ENCODE measurements at regions of chr10 and their contacts with region 1.

Region 1: GRCh38 chr10:88553116-88553752 is 29.9 kb downstream of the RNLS start:
- DNase-seq: peak; percentile 76
- H3K4me3 ChIP-seq: no peak overlapping the region
- H3K27ac ChIP-seq: no peak overlapping the region
- H3K4me1 ChIP-seq: no peaks in the 10 kb centered on the region
- H3K27me3 ChIP-seq: no peaks in the 10 kb centered on the region
- CTCF ChIP-seq: peak; percentile 63 to 64
- POLR2A ChIP-seq: no peak

Region 2: GRCh38 chr10:87850742-87851205 is 702.5 kb before region 1 on chr10:
- CTCF ChIA-PET with region 1: interaction called, 15 read pairs
- POLR2A ChIA-PET with region 1: no interaction called
- dilution Hi-C with region 1: loop called (anchors 25 kb)
- intact Hi-C with region 1: loop called (anchors 1 kb)
- DNase-seq: peak; percentile 54
- H3K4me3 ChIP-seq: no peak overlapping the region
- H3K27ac ChIP-seq: no peak overlapping the region
- H3K4me1 ChIP-seq: no peaks in the 10 kb centered on the region
- H3K27me3 ChIP-seq: no peaks in the 10 kb centered on the region
- CTCF ChIP-seq: peak; percentile 46 to 65
- POLR2A ChIP-seq: no peak

Region 3: DNA sequence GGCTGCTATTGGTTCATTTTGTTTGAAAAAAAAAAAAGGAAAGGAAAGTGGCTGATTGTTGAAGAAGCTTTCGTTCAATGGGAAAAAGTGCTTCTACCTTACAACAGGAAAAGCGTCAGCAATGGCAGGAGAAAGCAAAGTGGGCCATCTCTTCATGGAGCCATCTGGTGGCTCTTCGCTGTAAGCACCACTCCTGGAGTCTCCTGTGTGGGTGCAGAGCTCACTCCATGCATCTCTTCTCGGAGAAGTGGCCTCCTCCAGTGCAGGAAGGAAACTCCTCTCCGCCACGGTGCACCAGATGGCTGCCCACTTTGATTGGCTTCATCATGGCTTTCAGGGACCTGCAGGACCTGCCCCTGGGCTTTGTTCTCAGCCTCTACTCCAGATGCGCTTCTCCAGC is 438.9 kb before region 1 on chr10:
- CTCF ChIA-PET with region 1: interaction called, 6 read pairs
- POLR2A ChIA-PET with region 1: no interaction called
- dilution Hi-C with region 1: no loop called
- intact Hi-C with region 1: loop called (anchors 2 kb)
- DNase-seq: peak; percentile 51
- H3K4me3 ChIP-seq: no peak overlapping the region
- H3K27ac ChIP-seq: no peak overlapping the region
- H3K4me1 ChIP-seq: no peaks in the 10 kb centered on the region
- H3K27me3 ChIP-seq: no peaks in the 10 kb centered on the region
- CTCF ChIP-seq: peak; percentile 42 to 71
- POLR2A ChIP-seq: no peak

Region 4: GRCh38 chr10:88131511-88132154 is 421.6 kb before region 1 on chr10:
- CTCF ChIA-PET with region 1: no interaction called
- POLR2A ChIA-PET with region 1: no interaction called
- dilution Hi-C with region 1: no loop called
- intact Hi-C with region 1: no loop called
- DNase-seq: no peak
- H3K4me3 ChIP-seq: no peak overlapping the region
- H3K27ac ChIP-seq: no peak overlapping the region
- H3K4me1 ChIP-seq: no peaks in the 10 kb centered on the region
- H3K27me3 ChIP-seq: no peaks in the 10 kb centered on the region
- CTCF ChIP-seq: no peak
- POLR2A ChIP-seq: no peak

Region 5: DNA sequence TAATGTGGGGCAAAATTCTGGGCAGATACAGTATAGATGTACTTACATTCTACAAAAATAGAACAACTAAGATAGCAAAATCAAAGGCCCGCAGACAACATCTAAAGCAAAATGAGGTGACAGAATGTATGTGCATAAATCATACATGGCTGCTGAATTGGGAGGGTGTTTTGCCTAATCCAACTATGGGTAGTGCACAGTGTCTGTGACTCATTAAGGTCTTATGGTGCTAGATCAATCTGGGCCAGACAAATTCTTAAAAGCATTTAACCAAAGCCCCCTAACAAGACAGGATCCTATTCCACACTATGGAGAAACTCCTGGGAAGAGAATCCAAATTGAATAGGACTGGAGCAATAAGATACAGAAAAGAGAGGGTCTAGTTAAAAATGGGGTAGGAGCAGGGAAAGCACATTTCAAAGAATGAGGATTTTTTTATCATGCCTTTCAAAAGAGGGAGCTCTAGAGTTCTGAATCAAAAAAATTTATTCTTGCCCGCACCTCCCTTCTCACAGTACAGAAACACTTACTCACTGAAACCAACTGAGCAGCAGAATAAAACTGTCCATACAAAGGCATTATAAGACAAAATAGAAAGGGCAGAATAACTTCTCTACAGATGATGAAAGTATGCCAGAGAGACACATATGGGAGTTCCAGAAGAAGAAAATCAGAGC is 151.4 kb before region 1 on chr10:
- CTCF ChIA-PET with region 1: interaction called, 7 read pairs
- POLR2A ChIA-PET with region 1: no interaction called
- dilution Hi-C with region 1: no loop called
- intact Hi-C with region 1: loop called (anchors 2 kb)
- DNase-seq: peak; percentile 16
- H3K4me3 ChIP-seq: no peak overlapping the region
- H3K27ac ChIP-seq: no peak overlapping the region
- H3K4me1 ChIP-seq: no peaks in the 10 kb centered on the region
- H3K27me3 ChIP-seq: no peaks in the 10 kb centered on the region
- CTCF ChIP-seq: peak in 1 of 2 donors; percentile 17
- POLR2A ChIP-seq: no peak

Measured in endothelial cell of umbilical vein (primary cell).